ENCODE measurements at regions of chr12 and their contacts with region 1.

Region 1: GRCh38 chr12:751192-751998 is 984 bp upstream of the WNK1 start:
- DNase-seq: peak; percentile 94
- H3K4me3 Mint-ChIP-seq: no peak overlapping the region
- H3K27ac Mint-ChIP-seq: no peak overlapping the region
- H3K4me1 Mint-ChIP-seq: peaks cover 16% of the 10 kb centered on the region
- H3K27me3 Mint-ChIP-seq: no peaks in the 10 kb centered on the region

Region 2: DNA sequence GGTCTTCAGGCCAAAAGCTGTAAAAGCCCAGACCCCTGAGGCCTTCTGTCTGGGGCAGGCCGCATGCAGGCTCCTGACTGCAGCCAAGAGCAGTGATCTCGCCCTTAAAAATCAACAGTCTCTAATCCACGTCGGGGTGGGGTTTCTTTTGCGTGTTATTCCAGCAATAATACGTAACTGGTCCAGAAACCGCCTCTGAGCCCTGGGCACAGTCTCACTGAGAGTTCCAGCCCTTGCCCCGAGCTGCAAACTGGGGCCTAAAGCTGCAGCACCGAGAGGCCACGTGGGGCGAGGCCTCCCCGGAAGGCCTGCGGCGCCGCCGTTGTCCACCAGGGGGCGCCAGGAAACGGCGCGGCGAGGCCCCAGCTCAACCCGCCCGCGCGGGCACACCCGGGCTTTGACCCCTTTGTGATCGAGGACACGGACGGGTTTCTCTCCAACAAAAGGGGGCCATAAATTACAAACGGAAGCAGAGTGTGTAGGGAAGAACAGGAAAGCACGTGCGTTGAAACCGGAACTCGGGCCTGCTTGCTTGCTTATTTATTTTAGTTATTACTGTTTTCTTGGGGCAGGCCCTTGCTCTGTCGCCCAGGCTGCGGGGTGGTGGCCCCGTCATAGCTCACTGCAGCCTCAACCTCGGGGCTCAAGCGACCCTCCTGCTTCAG is 175.3 kb before region 1 on chr12:
- CTCF ChIA-PET with region 1: interaction called, 119 read pairs
- POLR2A ChIA-PET with region 1: interaction called, 27 read pairs
- intact Hi-C with region 1: loop called (anchors 1 kb)
- DNase-seq: peak; percentile 88
- H3K4me3 Mint-ChIP-seq: peak overlapping the region; percentile 51
- H3K27ac Mint-ChIP-seq: peak overlapping the region; percentile 45
- H3K4me1 Mint-ChIP-seq: peaks cover 34% of the 10 kb centered on the region
- H3K27me3 Mint-ChIP-seq: no peaks in the 10 kb centered on the region

Region 3: GRCh38 chr12:650983-651382 is 100.4 kb before region 1 on chr12:
- CTCF ChIA-PET with region 1: interaction called, 12 read pairs
- POLR2A ChIA-PET with region 1: no interaction called
- intact Hi-C with region 1: no loop called
- DNase-seq: no peak
- H3K4me3 Mint-ChIP-seq: no peak overlapping the region
- H3K27ac Mint-ChIP-seq: no peak overlapping the region
- H3K4me1 Mint-ChIP-seq: no peaks in the 10 kb centered on the region
- H3K27me3 Mint-ChIP-seq: no peaks in the 10 kb centered on the region

Region 4: GRCh38 chr12:685388-685787 is 66.0 kb before region 1 on chr12:
- CTCF ChIA-PET with region 1: interaction called, 24 read pairs
- POLR2A ChIA-PET with region 1: interaction called, 8 read pairs
- intact Hi-C with region 1: loop called (anchors 1 kb)
- DNase-seq: peak; percentile 92
- H3K4me3 Mint-ChIP-seq: no peak overlapping the region
- H3K27ac Mint-ChIP-seq: peak overlapping the region; percentile 77
- H3K4me1 Mint-ChIP-seq: peaks cover 36% of the 10 kb centered on the region
- H3K27me3 Mint-ChIP-seq: no peaks in the 10 kb centered on the region

Region 5: DNA sequence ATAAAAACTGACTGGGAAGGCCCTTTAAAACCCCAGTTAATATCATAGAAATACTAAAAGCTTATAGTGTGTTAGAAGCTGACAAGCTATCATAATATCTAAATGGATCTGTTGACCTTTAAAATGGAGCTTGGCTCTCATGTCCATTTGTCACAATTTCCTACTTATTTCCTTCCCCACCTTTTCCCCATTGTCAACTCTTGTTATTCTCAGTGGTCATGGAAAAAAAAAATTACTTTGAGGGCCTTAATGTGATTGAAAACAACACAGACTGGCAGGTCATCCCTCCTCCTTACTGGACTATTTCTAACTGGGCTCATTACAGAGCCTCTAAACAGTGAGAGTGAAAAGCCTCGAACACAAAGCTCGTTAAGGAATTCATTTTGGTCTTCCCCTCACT is 12.7 kb before region 1 on chr12:
- CTCF ChIA-PET with region 1: interaction called, 10 read pairs
- POLR2A ChIA-PET with region 1: interaction called, 3 read pairs
- intact Hi-C with region 1: loop called (anchors 1 kb)
- DNase-seq: no peak
- H3K4me3 Mint-ChIP-seq: no peak overlapping the region
- H3K27ac Mint-ChIP-seq: no peak overlapping the region
- H3K4me1 Mint-ChIP-seq: peaks cover 15% of the 10 kb centered on the region
- H3K27me3 Mint-ChIP-seq: no peaks in the 10 kb centered on the region

Region 6: DNA sequence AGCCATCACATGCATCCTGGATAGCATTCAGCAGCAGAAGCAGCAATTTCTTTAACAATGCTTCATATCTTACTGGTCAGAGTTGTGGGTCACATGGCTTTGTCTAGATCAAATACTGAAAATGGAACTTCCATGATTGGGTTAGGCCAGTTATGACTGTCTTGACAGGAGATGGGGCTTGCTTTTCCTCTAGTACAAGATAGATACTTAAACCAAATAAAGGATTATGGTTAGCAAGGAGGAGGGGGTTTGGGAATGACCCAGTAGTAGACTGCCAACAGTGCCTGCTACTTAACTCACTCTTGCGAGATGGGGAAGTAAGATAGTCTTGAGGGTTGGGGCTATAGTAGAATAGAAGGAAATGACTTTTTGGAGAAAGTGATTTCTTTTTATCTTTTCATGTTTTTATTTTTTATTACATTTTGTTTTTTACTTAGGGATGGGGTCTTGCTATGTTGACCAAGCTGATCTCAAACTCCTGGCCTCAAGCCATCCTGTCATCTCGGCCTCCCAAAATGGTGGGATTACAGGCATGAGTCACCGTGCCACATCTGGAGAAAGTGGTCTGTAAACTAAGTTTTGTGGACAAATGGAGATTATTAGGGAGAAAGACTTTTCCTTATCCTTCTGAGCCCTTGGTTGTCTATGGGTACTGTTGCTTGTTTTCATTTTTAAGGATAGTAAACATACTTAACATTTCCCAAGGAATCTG is 38.6 kb after region 1 on chr12:
- CTCF ChIA-PET with region 1: interaction called, 19 read pairs
- POLR2A ChIA-PET with region 1: interaction called, 17 read pairs
- intact Hi-C with region 1: loop called (anchors 1 kb)
- DNase-seq: no peak
- H3K4me3 Mint-ChIP-seq: no peak overlapping the region
- H3K27ac Mint-ChIP-seq: no peak overlapping the region
- H3K4me1 Mint-ChIP-seq: peaks cover 82% of the 10 kb centered on the region
- H3K27me3 Mint-ChIP-seq: no peaks in the 10 kb centered on the region

Region 7: DNA sequence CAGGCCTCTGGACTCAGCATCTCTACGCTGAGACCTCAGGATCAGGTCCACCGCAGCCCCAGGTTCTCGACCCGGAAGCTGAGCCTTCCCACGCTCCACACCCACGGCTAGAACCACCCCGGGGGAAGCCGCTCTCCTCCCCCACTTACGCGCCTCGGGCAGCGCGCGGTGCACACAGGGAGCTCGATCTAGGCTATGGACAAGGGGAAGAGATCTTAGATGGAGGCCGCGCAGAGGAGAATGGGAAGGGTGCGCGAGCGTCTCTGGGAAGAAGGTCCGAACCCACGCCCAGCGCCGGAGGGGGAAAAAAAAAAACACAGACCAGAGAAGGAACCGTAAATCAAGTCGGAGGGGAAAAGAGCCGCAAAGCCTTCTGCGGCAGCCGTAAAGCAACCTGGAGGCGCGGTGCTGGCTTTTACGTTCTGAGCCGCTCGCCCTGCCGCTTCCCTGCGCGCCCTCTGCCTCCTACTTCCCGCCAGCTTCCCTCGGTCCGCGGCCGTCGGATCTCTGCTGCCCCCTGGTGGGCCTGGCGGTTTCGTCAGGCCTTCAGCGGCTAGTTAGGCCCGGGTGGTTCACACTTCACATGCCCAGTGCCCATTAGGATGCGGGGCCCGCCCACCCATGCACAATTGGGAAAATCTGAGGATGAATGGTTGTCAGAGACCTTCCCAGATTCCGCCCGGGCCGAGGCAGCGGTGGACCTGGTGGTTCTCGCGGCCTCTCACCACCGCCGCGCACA is 198.2 kb after region 1 on chr12 and contains the start of gene RAD52:
- CTCF ChIA-PET with region 1: interaction called, 8 read pairs
- POLR2A ChIA-PET with region 1: interaction called, 3 read pairs
- intact Hi-C with region 1: loop called (anchors 1 kb)
- DNase-seq: peak; percentile 98
- H3K4me3 Mint-ChIP-seq: peak within 1 kb of the TSS; percentile 97
- H3K27ac Mint-ChIP-seq: peak within 1 kb of the TSS; percentile 91
- H3K4me1 Mint-ChIP-seq: peaks cover 30% of the 10 kb centered on the region
- H3K27me3 Mint-ChIP-seq: no peaks in the 10 kb centered on the region
- total RNA-seq, gene RAD52: 9.5 to 14.5 TPM

Measured in activated CD4-positive, alpha-beta memory T cell treated with anti-CD3 and anti-CD28 coated beads for 36 hours (primary cell).